GM13977 (cell line): ENCODE measurements at regions of chr16 and their contacts with region 1.

Region 1: DNA sequence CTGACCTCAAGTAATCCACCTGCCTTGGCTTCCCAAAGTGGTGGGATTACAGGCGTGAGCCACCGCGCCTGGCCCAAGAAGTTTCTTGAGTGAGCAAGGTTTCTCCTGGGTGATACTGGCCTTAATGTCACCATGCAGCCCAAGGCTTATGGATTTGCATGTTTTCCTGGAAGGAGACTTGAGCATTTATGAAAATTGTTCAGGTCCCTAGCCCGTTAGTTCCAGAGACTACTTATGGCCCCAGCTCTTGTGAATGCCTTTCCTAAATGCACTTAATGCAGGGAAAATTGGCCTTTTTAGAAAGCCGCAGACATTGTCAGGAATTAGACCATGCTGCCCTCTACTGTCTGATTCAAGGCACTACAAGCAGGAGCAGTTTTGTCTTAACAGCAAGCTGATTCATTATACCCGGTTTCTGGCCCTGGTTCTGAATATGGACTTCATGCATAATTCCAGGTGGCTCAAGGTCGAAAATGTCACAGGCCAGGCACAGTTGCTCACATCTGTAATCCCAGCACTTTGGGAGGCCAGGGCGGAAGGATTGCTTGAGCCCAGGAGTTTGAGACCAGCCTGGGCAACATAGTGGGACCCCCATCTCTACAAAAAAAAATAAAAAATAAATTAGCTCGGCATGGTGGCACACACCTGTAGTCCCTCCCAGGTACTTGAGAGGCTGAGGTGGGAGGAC is 91.3 kb downstream of the SNX29 start:
- DNase-seq: peak; percentile 76
- CTCF ChIP-seq: peak; percentile 91

Region 2: GRCh38 chr16:11851294-11852091 is 216.4 kb before region 1 on chr16 and contains the start of gene RSL1D1:
- in situ Hi-C with region 1: loop called (anchors 25 kb)
- DNase-seq: peak; percentile 96
- CTCF ChIP-seq: no peak

Region 3: GRCh38 chr16:11955713-11956123 is 112.1 kb before region 1 on chr16:
- in situ Hi-C with region 1: loop called (anchors 10 kb)
- DNase-seq: no peak
- CTCF ChIP-seq: no peak